ENCODE measurements at regions of chr9 and their contacts with region 1.

Region 1: GRCh38 chr9:109244157-109245132 is 76.4 kb downstream of the EPB41L4B start:
- DNase-seq: peak; percentile 75
- H3K4me3 ChIP-seq: no peak overlapping the region
- H3K27ac ChIP-seq: no peak overlapping the region
- H3K4me1 ChIP-seq: no peaks in the 10 kb centered on the region
- CTCF ChIP-seq: peak; percentile 86

Region 2: GRCh38 chr9:109017493-109017892 is 227.0 kb before region 1 on chr9:
- CTCF ChIA-PET with region 1: no interaction called
- POLR2A ChIA-PET with region 1: no interaction called
- intact Hi-C with region 1: no loop called
- DNase-seq: no peak
- H3K4me3 ChIP-seq: no peak overlapping the region
- H3K27ac ChIP-seq: no peak overlapping the region
- H3K4me1 ChIP-seq: peaks cover 11% of the 10 kb centered on the region
- CTCF ChIP-seq: no peak

Region 3: GRCh38 chr9:109320742-109321448 is 76.5 kb after region 1 on chr9 and contains the start of gene EPB41L4B:
- CTCF ChIA-PET with region 1: no interaction called
- POLR2A ChIA-PET with region 1: no interaction called
- intact Hi-C with region 1: loop called (anchors 2 kb)
- DNase-seq: peak; percentile 81
- H3K4me3 ChIP-seq: peak within 1 kb of the TSS; percentile 14
- H3K27ac ChIP-seq: no peak within 1 kb of the TSS
- H3K4me1 ChIP-seq: peaks cover 4% of the 10 kb centered on the region
- CTCF ChIP-seq: peak; percentile 83
- total RNA-seq, gene EPB41L4B: 0.49 TPM in 1 of 2 replicates, not detected in the other

Region 4: DNA sequence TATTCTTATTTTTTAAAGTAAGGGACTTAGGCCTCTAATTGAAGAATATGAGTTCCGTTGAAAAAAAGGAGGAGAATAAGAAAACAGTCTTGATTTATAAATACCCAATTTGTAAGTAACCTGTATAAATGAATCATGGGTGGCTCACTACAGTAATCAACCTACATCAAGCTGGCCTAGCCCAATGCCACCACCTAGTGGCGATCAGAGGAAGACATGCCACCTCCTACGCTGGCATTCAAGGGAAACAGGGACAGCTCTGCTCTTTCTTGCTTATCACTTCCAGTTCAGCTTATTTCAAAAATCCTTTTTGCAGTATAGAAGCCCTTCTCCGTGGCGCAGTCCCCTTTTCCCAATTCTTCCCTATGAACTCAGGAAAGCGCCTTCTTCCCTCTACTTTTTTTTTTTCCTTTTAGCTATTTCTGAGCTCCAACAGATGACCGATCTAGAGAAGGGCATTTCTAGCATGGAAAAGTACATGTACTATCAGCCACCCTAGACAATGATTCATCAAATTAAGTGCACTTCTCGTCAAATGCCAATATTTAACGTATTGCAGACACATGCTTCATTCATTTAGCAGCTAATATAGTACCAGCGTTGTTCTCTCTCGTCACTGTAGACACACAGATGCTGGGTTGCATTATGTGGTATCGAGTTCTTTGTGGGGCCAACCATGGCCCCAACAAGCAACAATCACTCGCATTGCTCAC is 225.4 kb after region 1 on chr9:
- CTCF ChIA-PET with region 1: no interaction called
- POLR2A ChIA-PET with region 1: no interaction called
- intact Hi-C with region 1: loop called (anchors 5 kb)
- DNase-seq: peak; percentile 67
- H3K4me3 ChIP-seq: no peak overlapping the region
- H3K27ac ChIP-seq: no peak overlapping the region
- H3K4me1 ChIP-seq: no peaks in the 10 kb centered on the region
- CTCF ChIP-seq: peak; percentile 93

Measured in OCI-LY7 (cell line).